ENCODE measurements at regions of chr14 and their contacts with region 1.

Region 1: DNA sequence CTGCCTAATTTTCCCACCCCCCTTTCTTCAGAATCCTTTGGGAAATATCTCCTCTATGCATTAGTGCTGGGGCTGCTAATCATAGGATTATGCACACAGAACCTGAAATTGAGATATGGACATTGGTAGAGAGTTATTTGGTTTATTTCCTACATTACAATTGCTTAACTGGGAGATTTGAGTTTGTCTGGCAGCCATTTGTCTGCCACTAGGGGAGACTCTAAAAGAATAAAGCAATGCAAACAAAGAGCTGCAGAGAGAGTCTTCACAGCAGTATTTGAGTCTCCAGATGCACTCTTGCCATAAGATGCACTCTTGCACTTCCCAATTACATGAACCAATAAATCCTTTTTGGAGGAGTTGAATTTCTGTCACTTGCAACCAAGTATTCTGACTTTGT is 12.0 kb upstream of the PCNX4 start:
- DNase-seq: no peak
- H3K4me3 ChIP-seq: no peak overlapping the region
- H3K27ac ChIP-seq: no peak overlapping the region
- H3K27me3 ChIP-seq: no peaks in the 10 kb centered on the region
- CTCF ChIP-seq: no peak

Region 2: GRCh38 chr14:59675394-59675793 is 404.3 kb before region 1 on chr14:
- intact Hi-C with region 1: no loop called
- DNase-seq: no peak
- H3K4me3 ChIP-seq: no peak overlapping the region
- H3K27ac ChIP-seq: peak overlapping the region in 1 of 59 donors; percentile 25
- H3K27me3 ChIP-seq: no peaks in the 10 kb centered on the region
- CTCF ChIP-seq: no peak

Region 3: GRCh38 chr14:60164712-60165546 is 85.2 kb after region 1 on chr14 and contains the start of gene DHRS7:
- intact Hi-C with region 1: loop called in 1 of 2 experiments (anchors 5 kb)
- DNase-seq: peak; percentile 72 to 89 (median 82)
- H3K4me3 ChIP-seq: peak within 1 kb of the TSS; percentile 62 to 99 (median 88)
- H3K27ac ChIP-seq: peak within 1 kb of the TSS; percentile 81 to 99 (median 95)
- H3K27me3 ChIP-seq: no peaks in the 10 kb centered on the region
- CTCF ChIP-seq: peak in 54 of 56 donors; percentile 7 to 92 (median 69)
- total RNA-seq, gene DHRS7: 37.5 to 72.7 (median 57.7) TPM

Measured in dorsolateral prefrontal cortex (tissue), 120 donors.